ENCODE measurements at regions of chr9 and their contacts with region 1.

Region 1: GRCh38 chr9:80932181-80932580 is 757.2 kb downstream of the TLE1 start:
- DNase-seq: peak; percentile 66
- H3K4me3 ChIP-seq: no peak overlapping the region
- H3K27ac ChIP-seq: no peak overlapping the region
- H3K4me1 ChIP-seq: no peaks in the 10 kb centered on the region
- H3K27me3 ChIP-seq: peaks cover 3% of the 10 kb centered on the region
- CTCF ChIP-seq: no peak

Region 2: DNA sequence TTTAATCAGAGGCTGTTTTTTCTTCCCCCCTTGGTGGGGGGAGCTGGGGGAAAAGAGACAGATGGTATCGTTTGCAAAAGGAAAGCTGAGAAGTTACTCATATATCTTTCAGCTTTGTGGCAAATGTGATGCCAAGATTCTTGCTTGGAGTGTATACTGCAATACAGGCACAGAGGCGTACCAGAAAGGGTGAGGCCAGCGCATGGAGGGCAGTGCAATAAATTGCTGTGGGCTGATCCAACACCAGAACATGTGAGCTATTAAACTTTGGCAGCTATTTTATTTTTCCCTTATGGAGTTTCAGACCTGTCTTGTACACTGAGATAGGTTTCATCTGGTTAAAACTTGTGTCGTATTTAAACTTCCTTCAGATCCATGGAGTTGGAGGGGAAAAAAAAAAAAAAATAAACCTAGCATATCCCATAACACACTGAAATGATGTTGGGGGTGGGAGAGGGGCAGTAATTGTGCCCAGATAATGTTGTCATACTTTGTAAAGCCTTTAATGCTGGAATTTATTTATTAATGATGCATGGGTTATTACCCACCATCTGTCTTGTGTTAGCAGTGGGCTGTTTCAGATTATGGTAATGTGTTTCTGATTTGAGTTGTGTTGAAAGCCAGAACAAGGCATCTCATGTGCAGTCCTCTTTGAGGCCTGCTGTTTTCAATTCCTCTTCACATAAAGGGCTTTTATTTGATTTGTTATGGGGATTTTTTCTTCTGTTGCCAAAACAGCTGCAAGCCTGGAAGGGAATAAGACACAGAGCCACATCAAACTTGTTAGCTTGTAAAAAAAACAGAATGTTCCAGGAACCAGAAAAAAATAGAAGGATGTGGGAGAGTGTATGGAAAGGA is 134.1 kb before region 1 on chr9:
- CTCF ChIA-PET with region 1: no interaction called
- POLR2A ChIA-PET with region 1: no interaction called
- intact Hi-C with region 1: loop called (anchors 5 kb)
- DNase-seq: peak; percentile 93
- H3K4me3 ChIP-seq: no peak overlapping the region
- H3K27ac ChIP-seq: peak overlapping the region; percentile 22
- H3K4me1 ChIP-seq: peaks cover 26% of the 10 kb centered on the region
- H3K27me3 ChIP-seq: no peaks in the 10 kb centered on the region
- CTCF ChIP-seq: no peak

Measured in A673 (cell line).